Activated CD8-positive, alpha-beta T cell treated with anti-CD3 and anti-CD28 coated beads for 36 hours (primary cell): ENCODE measurements at regions of chr4 and their contacts with region 1.

Region 1: GRCh38 chr4:6701371-6701770 is 7.7 kb downstream of the S100P start:
- DNase-seq: peak; percentile 63
- ATAC-seq: no peak
- H3K4me3 Mint-ChIP-seq: no peak overlapping the region
- H3K27ac Mint-ChIP-seq: no peak overlapping the region
- H3K4me1 Mint-ChIP-seq: peaks cover 63% of the 10 kb centered on the region
- H3K27me3 Mint-ChIP-seq: no peaks in the 10 kb centered on the region
- CTCF ChIP-seq: peak; percentile 61

Region 2: GRCh38 chr4:6688879-6689505 is 12.4 kb before region 1 on chr4:
- CTCF ChIA-PET with region 1: interaction called, 21 read pairs
- POLR2A ChIA-PET with region 1: interaction called, 11 read pairs
- intact Hi-C with region 1: no loop called
- DNase-seq: peak; percentile 96
- ATAC-seq: peak; percentile 85
- H3K4me3 Mint-ChIP-seq: peak overlapping the region; percentile 74
- H3K27ac Mint-ChIP-seq: peak overlapping the region; percentile 93
- H3K4me1 Mint-ChIP-seq: peaks cover 70% of the 10 kb centered on the region
- H3K27me3 Mint-ChIP-seq: no peaks in the 10 kb centered on the region
- CTCF ChIP-seq: no peak